GM23248 (cell line): ENCODE measurements at regions of chr1 and their contacts with region 1.

Region 1: GRCh38 chr1:93437976-93438605 is 9.8 kb upstream of the FNBP1L start:
- DNase-seq: peak; percentile 62
- H3K4me3 ChIP-seq: no peak overlapping the region
- H3K27ac ChIP-seq: no peak overlapping the region
- H3K4me1 ChIP-seq: peaks cover 12% of the 10 kb centered on the region
- H3K27me3 ChIP-seq: no peaks in the 10 kb centered on the region

Region 2: GRCh38 chr1:93253521-93253920 is 184.6 kb before region 1 on chr1:
- in situ Hi-C with region 1: no loop called
- DNase-seq: no peak
- H3K4me3 ChIP-seq: no peak overlapping the region
- H3K27ac ChIP-seq: no peak overlapping the region
- H3K4me1 ChIP-seq: peaks cover 7% of the 10 kb centered on the region
- H3K27me3 ChIP-seq: no peaks in the 10 kb centered on the region

Region 3: DNA sequence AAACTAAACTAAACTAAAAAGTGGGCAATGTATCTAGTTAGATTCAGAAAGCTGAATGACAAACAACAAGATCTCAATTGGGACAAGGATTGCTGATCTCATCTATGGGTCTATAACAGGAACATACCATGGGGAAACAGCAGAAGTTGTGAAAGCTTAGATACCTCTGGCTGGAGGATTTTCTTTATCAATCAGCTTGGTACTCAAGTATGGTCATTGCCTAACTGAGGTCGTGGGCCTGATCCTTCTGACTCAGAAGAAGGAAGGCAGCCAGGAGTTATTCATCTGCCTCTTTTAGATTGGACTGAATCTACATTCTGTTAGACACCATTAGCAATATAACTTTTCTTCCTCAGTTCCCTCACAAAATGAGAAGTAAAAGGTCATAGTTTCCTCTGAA is 401.2 kb after region 1 on chr1:
- in situ Hi-C with region 1: loop called (anchors 10 kb)
- DNase-seq: peak; percentile 96
- H3K4me3 ChIP-seq: no peak overlapping the region
- H3K27ac ChIP-seq: peak overlapping the region; percentile 64
- H3K4me1 ChIP-seq: peaks cover 43% of the 10 kb centered on the region
- H3K27me3 ChIP-seq: no peaks in the 10 kb centered on the region